Dorsolateral prefrontal cortex (tissue), 120 donors: ENCODE measurements at regions of chr1 and their contacts with region 1.

Region 1: DNA sequence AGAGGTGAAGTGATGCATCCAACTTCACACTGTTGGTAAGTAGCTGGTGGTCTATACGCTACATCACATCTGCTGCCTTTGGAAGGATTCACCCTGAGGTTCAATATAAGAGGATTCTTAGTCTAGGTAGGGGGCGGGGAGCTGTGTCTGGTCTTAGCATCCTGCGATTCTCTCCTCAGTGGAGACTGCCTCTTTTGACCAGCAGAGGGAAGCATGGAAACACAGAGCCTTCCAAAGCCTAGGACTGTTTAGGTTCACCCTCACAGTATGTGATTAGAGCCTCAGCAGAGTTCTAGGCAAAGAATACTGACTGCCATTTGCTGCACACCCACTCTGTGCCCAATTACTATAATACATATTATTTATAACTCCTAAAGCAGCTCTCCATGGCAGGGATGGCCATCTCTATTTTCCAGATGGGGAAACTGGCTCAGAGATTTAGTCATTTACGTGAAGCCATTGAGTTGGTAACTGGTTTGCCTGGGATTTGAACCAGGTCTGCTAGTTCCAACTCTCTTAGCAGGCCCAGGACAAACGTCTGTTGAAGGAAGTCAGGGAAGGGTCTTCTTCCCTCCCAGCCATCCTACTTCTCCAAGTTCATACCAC is 28.9 kb upstream of the EFCAB14 start:
- DNase-seq: peak in 5 of 10 donors; percentile 7 to 45 (median 38)
- H3K4me3 ChIP-seq: no peak overlapping the region
- H3K27ac ChIP-seq: no peak overlapping the region
- H3K27me3 ChIP-seq: peaks cover 0 to 5% (median 0%) of the 10 kb centered on the region in 45 donors
- CTCF ChIP-seq: peak in 55 of 56 donors; percentile 28 to 75 (median 58)

Region 2: GRCh38 chr1:46767649-46768282 is 20.0 kb after region 1 on chr1:
- intact Hi-C with region 1: no loop called
- DNase-seq: no peak
- H3K4me3 ChIP-seq: no peak overlapping the region
- H3K27ac ChIP-seq: no peak overlapping the region
- H3K27me3 ChIP-seq: peaks cover 0 to 30% (median 4%) of the 10 kb centered on the region in 45 donors
- CTCF ChIP-seq: no peak

Region 3: GRCh38 chr1:47059376-47059775 is 311.6 kb after region 1 on chr1:
- intact Hi-C with region 1: no loop called
- DNase-seq: no peak
- H3K4me3 ChIP-seq: no peak overlapping the region
- H3K27ac ChIP-seq: no peak overlapping the region
- H3K27me3 ChIP-seq: peaks cover 0 to 4% (median 0%) of the 10 kb centered on the region in 45 donors
- CTCF ChIP-seq: no peak

Region 4: DNA sequence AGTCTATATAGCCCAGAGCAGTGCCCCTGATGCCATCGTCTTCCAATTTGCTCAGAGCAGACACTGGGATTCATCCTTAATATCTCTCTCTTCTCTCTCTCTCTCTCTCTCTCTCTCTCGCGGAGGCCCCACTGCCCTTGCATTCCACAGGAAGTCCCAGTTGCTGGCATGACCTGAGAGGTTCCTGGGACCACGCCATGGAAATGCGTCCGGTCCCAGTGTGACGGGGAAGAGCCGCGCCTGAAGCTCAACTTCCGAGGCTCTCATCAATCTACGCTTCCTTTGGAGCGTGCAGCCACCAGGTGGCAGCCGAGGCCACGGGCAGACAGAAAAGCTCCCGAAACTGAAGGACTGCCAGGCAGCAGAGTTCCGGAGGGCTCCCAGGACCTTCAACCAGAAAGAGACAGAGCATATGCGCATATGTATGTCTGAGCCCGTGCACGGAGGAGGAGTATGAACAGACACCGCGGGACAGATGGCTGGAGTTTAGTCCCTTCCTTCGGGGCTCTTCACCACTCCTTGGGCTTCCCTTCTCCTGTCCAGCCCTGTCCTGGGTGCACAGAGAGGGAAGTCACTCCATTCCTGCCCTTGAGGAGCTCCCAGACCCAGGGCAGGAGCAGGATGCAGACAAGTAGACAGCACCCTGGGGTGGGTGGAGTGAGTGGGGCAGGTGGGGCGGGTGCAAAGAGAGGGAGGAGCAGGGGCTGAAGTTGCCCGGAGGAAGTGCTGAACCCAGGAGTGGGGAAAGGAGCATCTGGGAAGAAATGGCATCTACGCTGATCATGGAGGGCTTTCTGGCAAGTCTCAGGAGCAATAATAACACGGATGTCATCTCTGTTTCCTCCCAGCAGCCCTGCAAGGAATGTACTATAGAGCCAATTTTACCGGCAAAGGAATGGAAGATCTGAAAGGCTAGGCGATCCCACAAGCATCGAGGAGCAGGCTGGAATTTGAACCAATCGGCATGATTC is 431.5 kb after region 1 on chr1:
- intact Hi-C with region 1: loop called in 1 of 2 experiments (anchors 10 kb)
- DNase-seq: peak; percentile 51 to 92 (median 84)
- H3K4me3 ChIP-seq: peak overlapping the region in 58 of 59 donors; percentile 22 to 70 (median 50)
- H3K27ac ChIP-seq: peak overlapping the region in 32 of 59 donors; percentile 4 to 85 (median 44)
- H3K27me3 ChIP-seq: peaks cover 0 to 21% (median 0%) of the 10 kb centered on the region in 45 donors
- CTCF ChIP-seq: peak; percentile 67 to 95 (median 86)